ENCODE measurements at regions of chr5 and their contacts with region 1.

Region 1: DNA sequence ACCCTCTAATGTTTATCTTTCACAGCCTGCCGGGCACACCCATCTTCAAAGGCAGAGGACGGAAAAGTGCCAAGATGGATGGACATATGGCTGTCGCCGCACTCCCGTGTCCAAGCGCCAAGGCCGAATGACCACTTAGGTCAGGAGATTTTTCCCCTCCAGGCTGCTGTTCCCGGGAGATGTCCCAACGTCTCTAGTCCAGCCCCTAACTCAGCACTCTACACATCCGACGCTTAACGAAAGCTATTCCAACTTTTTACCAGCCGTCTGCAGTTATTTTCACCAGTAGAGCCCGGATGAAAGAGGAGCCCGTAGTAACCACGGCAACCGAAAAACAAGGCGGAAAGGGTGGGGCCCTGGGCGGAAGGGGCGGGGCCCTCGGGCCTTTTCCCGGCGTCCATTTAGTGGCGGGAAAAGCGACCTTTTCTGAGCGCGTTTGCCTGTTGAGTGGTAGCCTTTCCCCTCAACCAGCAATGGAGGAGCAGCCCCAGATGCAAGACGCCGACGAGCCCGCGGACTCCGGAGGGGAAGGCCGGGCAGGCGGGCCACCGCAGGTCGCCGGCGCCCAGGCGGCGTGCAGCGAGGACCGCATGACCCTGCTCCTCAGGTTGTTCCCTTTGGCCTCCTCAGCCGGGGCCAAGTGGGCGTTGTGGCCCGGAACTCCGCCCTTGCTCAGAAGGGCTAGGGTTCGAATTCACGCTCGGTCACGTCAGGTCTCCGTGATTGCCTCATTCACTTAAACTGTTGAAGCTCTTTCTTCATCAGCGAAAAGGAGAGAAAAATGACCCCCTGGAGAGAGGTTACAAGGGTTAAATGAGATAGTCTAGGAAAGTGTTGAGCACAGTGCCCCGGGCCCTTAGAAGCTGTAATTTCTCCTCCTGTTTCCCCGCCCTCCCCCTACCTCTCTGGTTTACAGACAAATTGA is at the start of gene CENPH:
- DNase-seq: peak; percentile 81
- ATAC-seq: peak; percentile 93
- H3K4me3 ChIP-seq: peak within 1 kb of the TSS; percentile 71 to 93
- H3K27ac ChIP-seq: peak within 1 kb of the TSS; percentile 74
- H3K4me1 ChIP-seq: peaks cover 2 to 14% of the 10 kb centered on the region in 2 experiments; a peak in 2 of 4 replicates
- H3K27me3 ChIP-seq: no peaks in the 10 kb centered on the region
- CTCF ChIP-seq: no peak
- POLR2A ChIP-seq: peak; percentile 78
- RAD21 ChIP-seq: no peak
- total RNA-seq, gene CENPH: 23.4 TPM

Region 2: DNA sequence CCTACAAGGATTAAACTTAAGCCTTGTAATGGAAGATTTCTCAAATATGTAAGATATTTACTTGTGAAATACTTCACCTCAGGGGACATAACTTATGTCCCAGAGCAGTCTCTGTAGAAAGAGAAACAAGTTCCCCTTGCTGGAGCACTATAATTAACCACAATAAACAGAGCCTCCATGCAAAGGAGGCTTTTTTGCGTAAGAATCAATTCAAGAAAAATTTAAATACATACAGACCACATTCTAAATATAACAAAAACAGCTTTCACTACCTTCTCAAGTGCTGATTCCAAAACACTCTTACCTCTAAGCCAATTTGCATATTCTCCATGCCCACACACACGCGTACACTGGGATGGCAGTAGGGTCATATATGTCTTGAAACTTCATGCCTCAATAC is 53.1 kb before region 1 on chr5:
- CTCF ChIA-PET with region 1: no interaction called
- POLR2A ChIA-PET with region 1: no interaction called
- RAD21 ChIA-PET with region 1: no interaction called
- intact Hi-C with region 1: loop called (anchors 10 kb)
- DNase-seq: no peak
- ATAC-seq: no peak
- H3K4me3 ChIP-seq: no peak overlapping the region
- H3K27ac ChIP-seq: no peak overlapping the region
- H3K4me1 ChIP-seq: no peaks in the 10 kb centered on the region
- H3K27me3 ChIP-seq: no peaks in the 10 kb centered on the region
- CTCF ChIP-seq: no peak
- POLR2A ChIP-seq: no peak
- RAD21 ChIP-seq: no peak

Region 3: DNA sequence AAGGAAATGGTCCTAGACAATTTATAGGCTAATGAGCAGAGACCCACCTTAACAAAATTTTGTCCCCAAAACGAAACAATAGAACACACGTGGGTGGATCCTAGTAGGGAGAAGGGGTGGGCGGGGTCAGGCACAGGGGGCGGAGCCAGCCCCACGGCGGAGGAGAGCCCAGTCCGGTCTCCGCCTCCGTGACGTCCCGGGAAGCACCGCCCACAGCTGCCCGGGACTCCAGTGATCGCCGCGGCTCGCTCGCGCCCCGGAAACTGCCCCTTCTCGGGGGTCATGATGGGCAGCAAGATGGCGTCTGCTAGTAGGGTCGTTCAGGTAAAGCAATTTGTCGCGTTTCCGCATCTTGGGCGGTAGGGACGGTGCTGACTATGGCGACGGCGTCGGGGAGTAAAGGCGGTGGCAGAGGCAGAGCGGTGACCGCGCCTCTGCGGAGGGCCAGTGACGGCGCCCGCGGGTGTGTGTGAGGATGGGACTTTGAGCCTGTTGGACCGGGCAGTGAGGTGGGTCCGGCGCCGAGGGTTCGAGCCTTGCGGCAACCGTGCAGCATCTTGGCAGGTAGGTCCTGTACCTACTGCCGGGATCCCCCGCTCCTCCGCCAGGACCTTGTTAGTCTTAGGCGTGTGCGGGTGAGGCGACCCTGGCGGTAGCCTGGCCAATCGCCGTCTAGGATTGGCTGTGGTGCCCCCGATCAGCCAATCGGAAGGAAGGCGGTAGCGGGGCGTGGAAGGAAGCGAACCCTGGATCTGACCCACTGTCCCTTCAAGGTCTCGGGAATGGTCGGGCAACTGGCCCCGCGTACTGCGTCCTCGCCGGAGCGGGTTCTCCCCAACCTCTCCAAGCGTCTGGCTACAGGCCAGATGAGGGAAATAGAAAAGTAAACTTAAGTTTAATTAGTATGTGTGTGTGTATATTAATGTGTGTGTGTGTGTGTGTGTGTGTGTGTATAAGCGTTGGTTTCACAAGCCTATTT is 28.4 kb after region 1 on chr5:
- CTCF ChIA-PET with region 1: no interaction called
- POLR2A ChIA-PET with region 1: no interaction called
- RAD21 ChIA-PET with region 1: no interaction called
- intact Hi-C with region 1: loop called (anchors 2 kb)
- DNase-seq: peak; percentile 83
- ATAC-seq: peak; percentile 93
- H3K4me3 ChIP-seq: peak overlapping the region; percentile 97
- H3K27ac ChIP-seq: peak overlapping the region; percentile 82
- H3K4me1 ChIP-seq: peaks cover 8 to 17% of the 10 kb centered on the region in 2 experiments; a peak in 3 of 4 replicates
- H3K27me3 ChIP-seq: no peaks in the 10 kb centered on the region
- CTCF ChIP-seq: peak in 1 of 3 experiments; percentile 15; a peak in 1 of 6 replicates
- POLR2A ChIP-seq: peak; percentile 48
- RAD21 ChIP-seq: no peak